OCI-LY7 (cell line): ENCODE measurements at regions of chr1 and their contacts with region 1.

Region 1: DNA sequence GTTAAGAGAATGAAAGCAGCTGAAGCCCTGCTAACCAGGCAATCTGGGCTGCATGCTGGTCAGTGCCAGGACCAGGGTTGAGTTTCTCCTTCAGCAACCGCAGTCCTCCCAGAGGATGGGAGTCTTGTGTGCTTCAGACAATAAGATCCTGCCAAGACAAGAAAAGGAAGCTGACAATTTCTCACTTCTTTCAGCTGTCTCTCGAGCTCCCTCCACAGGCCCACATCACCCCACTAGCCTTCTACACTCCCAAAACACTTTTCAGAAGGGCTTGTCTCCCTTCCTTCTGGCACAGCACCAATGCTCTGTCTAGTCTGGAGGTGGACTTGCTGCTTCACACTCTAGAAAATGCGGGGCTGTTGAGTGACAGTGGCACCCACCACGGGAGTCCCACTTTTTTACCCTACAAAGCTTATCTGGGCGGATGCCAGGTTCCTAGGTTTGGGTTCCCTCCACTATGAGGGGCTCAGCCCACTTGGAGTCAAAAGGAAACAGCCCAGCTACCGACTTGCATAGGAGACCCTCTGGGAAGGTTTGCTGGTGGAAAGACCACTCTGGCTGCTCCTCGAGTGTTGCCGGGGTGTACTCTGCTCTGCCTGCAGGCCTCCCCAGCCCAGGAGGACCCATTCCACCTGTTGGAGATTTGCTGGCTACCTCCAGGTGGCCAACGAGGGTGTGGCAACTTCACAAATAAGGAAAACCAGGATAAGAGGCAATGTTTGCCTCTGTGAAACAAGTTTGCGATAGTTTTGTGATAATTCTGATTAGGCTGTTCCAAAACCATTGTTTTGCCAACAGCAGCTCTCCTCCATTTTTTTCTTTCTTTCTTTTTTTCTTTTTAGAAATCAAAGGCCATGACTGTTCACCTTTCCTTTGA is 68.9 kb downstream of the TENT5C start:
- DNase-seq: peak; percentile 87
- H3K4me3 ChIP-seq: no peak overlapping the region
- H3K27ac ChIP-seq: peak overlapping the region; percentile 1
- H3K4me1 ChIP-seq: peaks cover 54% of the 10 kb centered on the region
- CTCF ChIP-seq: peak; percentile 92

Region 2: DNA sequence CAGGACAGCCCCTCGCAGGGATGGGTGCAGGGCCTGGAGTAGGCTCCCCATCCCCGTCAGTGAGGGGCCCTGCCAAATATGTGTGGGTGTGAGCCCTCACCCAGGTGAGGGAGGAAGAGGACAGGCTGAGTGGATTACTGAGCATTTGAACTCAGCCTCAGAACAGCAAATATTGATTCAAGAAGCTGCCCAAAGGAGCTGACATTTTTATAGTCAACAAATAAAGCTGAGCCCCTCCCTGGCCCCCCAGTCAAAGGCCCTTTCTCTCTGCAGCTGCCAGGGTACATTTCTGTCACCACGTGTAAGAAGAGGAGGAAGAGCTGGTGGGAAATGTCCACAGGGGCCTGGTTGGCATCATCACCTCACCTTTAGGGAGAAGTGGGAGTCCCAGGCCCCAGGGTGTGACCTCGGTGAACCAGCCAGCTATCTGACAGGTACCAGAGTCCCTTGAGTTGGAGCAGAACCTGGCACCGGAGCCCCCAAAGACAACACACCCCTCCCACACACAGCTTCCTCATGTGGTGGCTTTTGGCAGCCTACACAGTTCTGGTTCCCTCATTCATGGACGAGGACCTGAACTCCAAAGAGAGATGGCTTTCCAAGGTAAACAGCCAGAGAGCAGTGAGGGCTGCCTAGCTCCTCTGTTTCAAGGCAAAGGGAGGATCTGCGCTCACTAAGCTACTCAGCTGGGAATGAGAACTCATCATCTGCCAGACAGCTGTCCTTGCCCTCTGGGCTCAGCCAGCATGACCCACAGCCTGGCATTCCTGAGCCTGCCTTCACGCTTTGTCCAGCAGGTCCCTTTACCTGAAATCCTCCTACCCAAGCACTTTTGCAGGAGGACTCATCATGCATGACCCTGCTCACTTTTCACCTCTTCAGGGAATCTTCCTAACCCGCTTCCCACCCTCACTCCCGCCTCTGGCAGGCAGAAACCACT is 111.9 kb before region 1 on chr1:
- CTCF ChIA-PET with region 1: no interaction called
- POLR2A ChIA-PET with region 1: no interaction called
- intact Hi-C with region 1: no loop called
- DNase-seq: no peak
- H3K4me3 ChIP-seq: no peak overlapping the region
- H3K27ac ChIP-seq: no peak overlapping the region
- H3K4me1 ChIP-seq: no peaks in the 10 kb centered on the region
- CTCF ChIP-seq: no peak

Region 3: DNA sequence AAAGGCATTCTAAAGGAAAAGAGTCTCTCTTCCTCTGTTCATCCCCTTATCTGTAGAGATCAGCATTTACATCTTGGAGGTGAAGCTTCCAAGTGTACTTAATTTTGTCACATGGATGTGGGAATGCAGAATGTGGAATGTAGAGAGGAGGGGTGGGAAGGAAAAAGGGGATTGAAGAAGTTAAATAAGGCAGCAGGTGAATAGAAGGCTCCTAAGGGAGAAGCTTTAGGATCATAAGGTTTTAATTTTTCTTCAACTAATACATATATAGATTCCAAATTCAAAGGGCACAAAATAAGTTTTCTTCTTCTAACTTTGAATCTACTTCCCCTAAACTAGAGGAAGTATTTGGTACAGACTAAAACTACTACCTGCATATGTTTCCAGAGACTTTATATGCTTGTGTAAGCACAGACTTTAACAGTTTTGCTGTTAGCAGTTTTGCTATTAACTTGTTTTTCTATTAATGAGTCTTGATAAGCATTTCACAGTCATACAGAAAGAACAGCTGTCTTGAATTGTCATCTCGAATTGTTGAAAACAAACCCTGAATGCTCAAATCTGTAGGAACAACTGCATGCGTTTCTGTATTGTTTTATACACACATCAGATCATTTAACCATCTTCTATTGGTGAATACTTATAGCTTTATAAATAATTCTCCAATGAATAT is 56.2 kb before region 1 on chr1:
- CTCF ChIA-PET with region 1: interaction called, 3 read pairs
- POLR2A ChIA-PET with region 1: interaction called, 13 read pairs
- intact Hi-C with region 1: no loop called
- DNase-seq: no peak
- H3K4me3 ChIP-seq: no peak overlapping the region
- H3K27ac ChIP-seq: no peak overlapping the region
- H3K4me1 ChIP-seq: peaks cover 59% of the 10 kb centered on the region
- CTCF ChIP-seq: no peak

Region 4: GRCh38 chr1:117632269-117633067 is 42.3 kb before region 1 on chr1:
- CTCF ChIA-PET with region 1: interaction called, 11 read pairs
- POLR2A ChIA-PET with region 1: interaction called, 32 read pairs
- intact Hi-C with region 1: loop called (anchors 1 kb)
- DNase-seq: peak; percentile 83
- H3K4me3 ChIP-seq: peak overlapping the region; percentile 56
- H3K27ac ChIP-seq: peak overlapping the region; percentile 85
- H3K4me1 ChIP-seq: peaks cover 99% of the 10 kb centered on the region
- CTCF ChIP-seq: no peak

Region 5: DNA sequence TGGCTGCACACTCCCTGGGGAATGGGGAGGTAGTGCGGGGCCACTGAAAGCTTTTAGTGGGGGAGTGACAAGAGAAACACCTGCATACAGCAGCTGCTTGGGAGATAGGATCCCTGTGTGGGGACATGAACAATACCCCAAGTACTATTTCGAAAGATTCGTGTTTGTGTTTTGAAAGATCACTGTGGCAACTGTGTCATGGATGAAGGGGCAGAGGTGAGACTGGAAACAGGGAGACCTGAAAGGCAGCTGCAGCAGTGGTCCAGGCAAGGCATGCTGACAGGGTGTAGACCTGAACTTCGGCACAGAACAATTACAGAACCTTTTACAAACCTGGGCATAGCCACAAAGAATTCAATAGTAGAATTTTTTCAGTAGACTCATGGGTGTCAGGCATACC is 36.0 kb before region 1 on chr1:
- CTCF ChIA-PET with region 1: interaction called, 3 read pairs
- POLR2A ChIA-PET with region 1: interaction called, 10 read pairs
- intact Hi-C with region 1: no loop called
- DNase-seq: peak; percentile 83
- H3K4me3 ChIP-seq: peak overlapping the region; percentile 26
- H3K27ac ChIP-seq: peak overlapping the region; percentile 70
- H3K4me1 ChIP-seq: peaks cover 100% of the 10 kb centered on the region
- CTCF ChIP-seq: no peak

Region 6: DNA sequence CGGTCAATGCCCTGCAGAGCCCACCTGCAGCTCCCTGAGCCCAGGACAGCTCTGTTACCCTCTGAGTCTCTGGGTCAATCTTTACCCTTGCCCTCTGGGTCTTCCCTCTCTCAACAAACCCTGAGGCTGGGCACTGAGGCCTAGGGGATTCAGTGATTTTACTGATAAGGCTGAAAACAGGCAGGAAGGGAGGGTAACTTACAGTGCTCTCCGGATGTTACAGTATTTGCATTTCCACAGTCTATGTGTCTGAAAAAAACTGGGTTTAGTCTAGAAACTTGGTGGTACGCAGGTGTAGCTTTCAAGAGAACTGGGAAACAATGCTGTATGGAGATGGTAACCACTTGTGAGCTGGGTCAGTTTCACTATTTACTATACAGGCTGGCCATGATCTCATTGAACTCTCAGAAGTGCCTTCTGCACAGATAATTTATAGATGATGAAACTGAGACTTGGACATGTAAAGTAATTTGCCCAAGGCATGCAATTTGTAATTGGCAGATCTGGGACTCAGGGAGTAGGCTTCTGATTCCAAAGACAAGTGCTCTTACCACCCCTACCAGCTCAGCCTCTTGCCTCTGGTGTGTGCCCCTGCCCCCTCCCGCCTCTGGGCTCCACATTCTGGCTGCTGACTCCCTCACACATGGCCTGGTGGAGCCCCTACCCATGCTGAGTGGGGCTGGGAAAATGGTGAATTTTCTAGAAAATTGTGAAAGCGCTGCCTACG is 20.1 kb before region 1 on chr1:
- CTCF ChIA-PET with region 1: interaction called, 8 read pairs
- POLR2A ChIA-PET with region 1: interaction called, 42 read pairs
- intact Hi-C with region 1: loop called (anchors 1 kb)
- DNase-seq: peak; percentile 95
- H3K4me3 ChIP-seq: peak overlapping the region; percentile 48
- H3K27ac ChIP-seq: peak overlapping the region; percentile 98
- H3K4me1 ChIP-seq: peaks cover 99% of the 10 kb centered on the region
- CTCF ChIP-seq: no peak

Region 7: DNA sequence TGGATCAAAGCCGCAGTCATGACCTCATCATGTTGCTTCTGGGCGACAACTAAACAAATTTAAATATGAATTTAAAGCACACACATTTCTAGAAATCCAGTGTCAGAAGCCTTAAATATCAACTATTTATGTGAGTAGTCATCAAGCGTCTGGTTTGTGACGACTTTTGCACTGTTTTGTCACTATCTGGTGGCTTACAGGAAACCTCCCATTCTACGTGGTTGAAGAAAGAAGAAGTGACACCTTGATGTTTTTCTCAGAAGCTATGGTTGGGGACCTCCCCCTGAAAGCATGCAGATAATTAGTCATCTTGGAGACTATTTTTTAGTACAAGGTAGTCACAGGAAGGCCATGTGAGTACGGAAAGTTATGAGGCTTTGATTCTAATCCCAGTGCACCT is 10.4 kb before region 1 on chr1:
- CTCF ChIA-PET with region 1: interaction called, 7 read pairs
- POLR2A ChIA-PET with region 1: interaction called, 42 read pairs
- intact Hi-C with region 1: loop called (anchors 1 kb)
- DNase-seq: peak; percentile 93
- H3K4me3 ChIP-seq: peak overlapping the region; percentile 30
- H3K27ac ChIP-seq: peak overlapping the region; percentile 91
- H3K4me1 ChIP-seq: peaks cover 84% of the 10 kb centered on the region
- CTCF ChIP-seq: no peak

Region 8: GRCh38 chr1:117702654-117703053 is 27.9 kb after region 1 on chr1:
- CTCF ChIA-PET with region 1: no interaction called
- POLR2A ChIA-PET with region 1: no interaction called
- intact Hi-C with region 1: no loop called
- DNase-seq: no peak
- H3K4me3 ChIP-seq: no peak overlapping the region
- H3K27ac ChIP-seq: no peak overlapping the region
- H3K4me1 ChIP-seq: no peaks in the 10 kb centered on the region
- CTCF ChIP-seq: no peak

Region 9: GRCh38 chr1:117758444-117759316 is 83.9 kb after region 1 on chr1:
- CTCF ChIA-PET with region 1: interaction called, 4 read pairs
- POLR2A ChIA-PET with region 1: interaction called, 3 read pairs
- intact Hi-C with region 1: loop called (anchors 2 kb)
- DNase-seq: peak; percentile 89
- H3K4me3 ChIP-seq: no peak overlapping the region
- H3K27ac ChIP-seq: no peak overlapping the region
- H3K4me1 ChIP-seq: peaks cover 5% of the 10 kb centered on the region
- CTCF ChIP-seq: peak; percentile 95